Activated naive CD4-positive, alpha-beta T cell treated with anti-CD3 and anti-CD28 coated beads for 36 hours (primary cell): ENCODE measurements at regions of chr19 and their contacts with region 1.

Region 1: GRCh38 chr19:6372594-6373095 is at the start of gene ALKBH7:
- DNase-seq: peak; percentile 99
- H3K4me3 Mint-ChIP-seq: peak within 1 kb of the TSS; percentile 89
- H3K27ac Mint-ChIP-seq: peak within 1 kb of the TSS; percentile 94
- H3K4me1 Mint-ChIP-seq: peaks cover 18% of the 10 kb centered on the region
- H3K27me3 Mint-ChIP-seq: no peaks in the 10 kb centered on the region
- total RNA-seq, gene ALKBH7: 39.5 to 42.4 TPM

Region 2: GRCh38 chr19:6279931-6280591 is 92.6 kb before region 1 on chr19 and contains the start of gene MLLT1:
- CTCF ChIA-PET with region 1: no interaction called
- intact Hi-C with region 1: loop called (anchors 5 kb)
- DNase-seq: peak; percentile 97
- H3K4me3 Mint-ChIP-seq: peak within 1 kb of the TSS; percentile 94
- H3K27ac Mint-ChIP-seq: peak within 1 kb of the TSS; percentile 87
- H3K4me1 Mint-ChIP-seq: peaks cover 33% of the 10 kb centered on the region
- H3K27me3 Mint-ChIP-seq: no peaks in the 10 kb centered on the region
- total RNA-seq, gene MLLT1: 30.6 to 31.3 TPM

Region 3: DNA sequence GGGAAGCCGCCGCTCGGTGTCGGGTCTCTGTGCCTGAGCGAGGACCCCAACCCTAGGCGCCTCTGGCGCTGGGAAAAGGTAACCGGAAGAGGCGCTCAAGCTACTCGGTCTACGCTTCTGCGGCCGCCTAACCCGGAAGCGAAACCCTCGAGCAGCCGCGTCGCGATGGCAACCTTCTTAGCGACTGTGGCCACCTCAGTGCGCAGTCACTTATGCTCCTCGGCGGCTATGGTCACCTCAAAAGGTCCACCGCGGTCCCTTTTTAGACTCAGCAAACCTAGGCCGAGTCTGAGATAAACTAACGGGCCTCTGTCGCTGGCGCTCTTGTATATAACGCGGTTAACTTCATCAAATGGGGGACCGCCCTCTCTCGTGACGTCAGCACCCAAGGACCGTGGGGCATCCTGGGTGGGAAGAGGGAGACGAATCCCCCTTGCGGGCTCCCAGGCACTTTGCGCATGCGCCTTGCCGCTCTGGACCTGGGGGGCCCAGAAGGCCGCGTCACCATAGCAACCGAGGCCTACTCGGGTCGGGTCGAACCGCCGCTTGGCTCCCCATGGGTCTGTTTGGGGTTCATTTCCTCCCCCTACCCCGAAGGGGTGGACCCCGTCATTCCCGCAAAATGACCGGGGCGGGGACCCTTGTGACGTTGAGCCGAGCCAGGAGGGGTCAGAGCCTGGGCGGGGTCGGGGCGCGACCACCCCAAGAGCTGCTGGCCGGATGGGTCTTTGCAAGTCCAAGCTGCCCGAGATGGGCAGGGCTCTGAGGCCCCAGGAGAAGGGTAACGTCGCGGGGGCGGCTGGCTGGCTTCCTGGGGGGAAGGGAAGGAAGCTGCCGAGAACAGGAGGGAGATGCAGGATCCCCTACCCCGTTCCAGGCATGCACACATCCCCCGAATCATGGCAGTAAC is 20.7 kb after region 1 on chr19 and contains the start of gene GTF2F1:
- CTCF ChIA-PET with region 1: no interaction called
- intact Hi-C with region 1: loop called (anchors 1 kb)
- DNase-seq: peak; percentile 95
- H3K4me3 Mint-ChIP-seq: peak within 1 kb of the TSS; percentile 88
- H3K27ac Mint-ChIP-seq: peak within 1 kb of the TSS; percentile 92
- H3K4me1 Mint-ChIP-seq: peaks cover 16% of the 10 kb centered on the region
- H3K27me3 Mint-ChIP-seq: no peaks in the 10 kb centered on the region
- total RNA-seq, gene GTF2F1: 53.5 to 63.0 TPM

Region 4: DNA sequence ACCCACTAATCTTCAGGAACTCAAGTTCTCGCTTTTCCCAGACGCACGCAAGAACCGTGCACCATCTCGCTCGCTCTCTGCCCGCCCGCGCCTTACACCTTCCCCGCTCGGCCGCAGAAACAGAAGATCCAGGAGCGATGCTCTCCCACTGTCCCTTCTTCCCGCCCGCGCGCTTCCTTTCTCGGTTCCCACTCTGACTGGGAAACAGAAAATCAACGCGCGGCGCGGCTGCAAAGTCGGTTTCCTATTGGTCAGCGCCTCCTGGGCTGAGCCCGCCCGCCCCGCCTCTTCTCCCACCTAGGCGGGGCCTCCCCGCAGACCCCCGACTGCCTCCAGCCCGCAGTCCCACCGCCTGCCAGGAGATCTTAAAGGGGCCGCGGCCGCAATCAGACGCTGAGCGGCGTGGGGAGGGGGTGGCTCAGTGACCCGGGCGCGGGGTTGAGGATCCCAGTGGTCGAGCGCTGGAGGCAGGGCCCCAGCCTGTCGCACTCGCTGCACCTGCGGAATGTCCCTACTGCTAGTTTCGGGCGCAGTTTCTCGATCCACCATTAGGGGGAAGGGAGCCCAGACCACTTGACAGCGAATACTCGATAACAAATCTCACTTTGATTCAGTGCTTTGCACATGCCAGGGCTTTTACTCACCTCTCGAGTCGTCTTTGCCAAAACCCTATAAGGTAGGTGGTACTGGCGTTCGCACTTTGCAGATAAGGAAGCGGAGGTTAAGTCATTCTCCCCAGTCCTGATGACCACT is 87.6 kb after region 1 on chr19:
- CTCF ChIA-PET with region 1: interaction called, 4 read pairs
- intact Hi-C with region 1: loop called (anchors 1 kb)
- DNase-seq: peak; percentile 98
- H3K4me3 Mint-ChIP-seq: peak overlapping the region; percentile 90
- H3K27ac Mint-ChIP-seq: peak overlapping the region; percentile 78
- H3K4me1 Mint-ChIP-seq: peaks cover 22% of the 10 kb centered on the region
- H3K27me3 Mint-ChIP-seq: no peaks in the 10 kb centered on the region

Region 5: GRCh38 chr19:6516659-6517291 is 144.1 kb after region 1 on chr19:
- CTCF ChIA-PET with region 1: no interaction called
- intact Hi-C with region 1: no loop called
- DNase-seq: peak; percentile 96
- H3K4me3 Mint-ChIP-seq: peak overlapping the region; percentile 89
- H3K27ac Mint-ChIP-seq: peak overlapping the region; percentile 80
- H3K4me1 Mint-ChIP-seq: peaks cover 27% of the 10 kb centered on the region
- H3K27me3 Mint-ChIP-seq: no peaks in the 10 kb centered on the region

Region 6: DNA sequence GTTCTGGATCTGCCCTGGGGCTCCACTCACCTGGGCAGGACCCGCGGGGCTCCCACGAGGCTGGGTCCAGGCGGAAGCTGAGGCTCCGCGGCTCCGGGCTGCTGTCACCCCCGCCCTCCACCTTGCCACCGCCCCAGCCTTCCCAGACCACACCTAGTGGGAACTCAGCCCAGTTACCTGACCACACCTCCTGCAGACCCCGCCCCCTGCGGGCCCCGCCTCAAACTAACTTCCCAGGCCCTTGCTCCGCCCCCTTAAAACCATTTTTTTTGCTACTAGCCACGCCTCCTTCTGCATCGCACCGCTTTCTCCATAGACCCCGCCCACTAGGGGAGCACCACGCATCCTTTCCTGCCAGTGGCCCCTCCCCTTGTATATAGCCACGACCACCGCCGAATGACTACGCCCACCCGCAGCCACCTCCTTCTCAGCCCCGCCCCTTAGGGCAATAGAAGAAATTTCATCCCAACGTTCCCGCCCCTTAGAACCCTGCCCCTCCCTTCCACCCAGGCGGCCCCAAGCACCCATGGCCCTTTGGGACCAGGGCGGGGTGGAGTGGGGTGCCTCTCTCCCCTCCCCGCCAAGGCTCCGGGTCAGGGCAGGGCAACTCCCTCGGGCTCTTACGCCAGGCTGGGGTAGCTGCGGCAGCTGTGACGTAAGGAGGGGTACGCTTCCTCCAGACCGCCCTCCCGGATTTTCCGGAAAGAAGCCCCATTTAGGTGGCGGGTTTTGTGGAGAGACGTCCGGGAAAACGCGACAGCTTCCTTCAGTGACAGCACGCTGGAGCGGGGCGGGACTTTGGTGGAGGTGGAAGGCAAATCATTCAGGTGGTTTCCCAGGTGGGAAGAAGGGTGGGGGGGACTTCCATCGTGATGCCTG is 395.0 kb after region 1 on chr19 and contains the start of gene SH2D3A:
- CTCF ChIA-PET with region 1: no interaction called
- intact Hi-C with region 1: loop called (anchors 1 kb)
- DNase-seq: peak; percentile 98
- H3K4me3 Mint-ChIP-seq: peak within 1 kb of the TSS; percentile 94
- H3K27ac Mint-ChIP-seq: peak within 1 kb of the TSS; percentile 91
- H3K4me1 Mint-ChIP-seq: peaks cover 39% of the 10 kb centered on the region
- H3K27me3 Mint-ChIP-seq: no peaks in the 10 kb centered on the region
- total RNA-seq, gene SH2D3A: 23.2 to 24.9 TPM